Dorsolateral prefrontal cortex (tissue), 120 donors: ENCODE measurements at regions of chr18 and their contacts with region 1.

Region 1: DNA sequence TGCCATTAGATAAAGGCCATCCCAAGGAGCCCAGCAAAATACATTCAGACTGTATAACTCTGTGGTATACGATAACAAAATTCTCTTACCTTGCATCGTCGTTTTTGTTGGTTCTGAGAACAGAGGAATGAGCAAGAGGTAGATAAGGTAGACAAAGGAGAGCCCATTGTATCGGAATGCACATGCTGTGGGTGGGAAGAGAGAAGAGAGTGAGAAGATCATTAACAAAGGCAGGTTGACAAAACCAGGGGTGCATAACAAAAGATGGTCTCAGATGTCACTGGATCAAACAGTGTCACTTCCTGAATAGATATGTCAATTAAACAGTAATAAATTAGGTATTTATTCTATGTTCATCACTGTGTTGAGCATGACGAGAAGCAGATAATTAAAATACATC is 83.3 kb downstream of the PIEZO2 start:
- DNase-seq: no peak
- H3K4me3 ChIP-seq: no peak overlapping the region
- H3K27ac ChIP-seq: no peak overlapping the region
- H3K27me3 ChIP-seq: no peaks in the 10 kb centered on the region
- CTCF ChIP-seq: no peak

Region 2: DNA sequence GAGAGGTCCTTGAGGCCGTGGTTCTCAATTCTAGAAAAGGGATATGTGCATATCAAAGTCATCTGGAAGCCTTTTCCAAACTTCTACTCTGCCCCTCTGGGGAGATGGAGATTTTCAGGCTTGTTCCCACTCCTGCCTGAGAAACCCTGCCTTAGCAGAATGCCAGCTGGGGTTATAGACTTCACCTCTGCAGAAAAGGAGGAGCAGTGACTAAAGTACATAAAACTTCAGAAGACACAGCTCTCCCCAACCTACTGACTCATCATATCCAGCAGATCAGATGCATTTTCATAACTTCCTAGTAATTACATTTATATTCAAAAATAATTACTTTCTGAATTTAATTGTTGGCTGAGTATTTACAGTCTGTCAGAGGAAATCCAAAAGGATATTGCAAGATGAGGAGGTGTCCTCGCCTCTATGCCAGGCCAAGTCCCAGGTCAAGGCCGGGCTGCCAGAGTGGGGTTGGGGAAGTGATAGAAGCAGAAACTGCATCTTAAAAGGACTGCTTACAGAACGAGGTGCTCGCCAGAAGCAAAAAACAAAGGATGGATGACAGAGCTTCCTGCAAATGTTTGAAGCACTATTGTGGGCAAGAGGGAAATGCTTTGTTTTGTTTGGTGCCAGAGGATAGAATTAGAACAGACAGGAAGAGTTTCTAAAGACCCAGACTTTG is 687.2 kb before region 1 on chr18:
- intact Hi-C with region 1: no loop called
- DNase-seq: no peak
- H3K4me3 ChIP-seq: no peak overlapping the region
- H3K27ac ChIP-seq: no peak overlapping the region
- H3K27me3 ChIP-seq: no peaks in the 10 kb centered on the region
- CTCF ChIP-seq: no peak

Region 3: DNA sequence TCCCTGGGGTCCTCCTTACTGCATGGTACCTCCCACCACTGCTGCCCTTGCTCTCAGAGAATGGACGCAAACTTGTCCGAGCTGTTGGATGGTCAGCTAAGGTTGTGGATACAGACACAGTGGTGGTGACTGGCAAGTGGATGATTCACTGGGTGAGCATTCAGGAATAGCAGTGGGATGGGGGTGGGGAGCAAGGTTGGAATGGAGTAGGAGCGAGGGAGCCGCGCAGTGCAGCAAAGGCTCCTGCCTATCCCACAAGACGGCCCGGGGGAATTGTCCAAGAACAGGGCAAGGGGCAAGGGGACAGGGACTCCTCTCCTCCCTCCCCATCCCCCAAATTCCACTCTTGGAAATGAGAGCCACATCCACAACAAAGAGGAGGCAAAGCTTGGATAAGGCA is 18.9 kb before region 1 on chr18:
- intact Hi-C with region 1: loop called in 1 of 2 experiments (anchors 2 kb)
- DNase-seq: no peak
- H3K4me3 ChIP-seq: no peak overlapping the region
- H3K27ac ChIP-seq: peak overlapping the region in 1 of 59 donors; percentile 11
- H3K27me3 ChIP-seq: no peaks in the 10 kb centered on the region
- CTCF ChIP-seq: no peak

Region 4: GRCh38 chr18:11096411-11096810 is 30.4 kb after region 1 on chr18:
- intact Hi-C with region 1: no loop called
- DNase-seq: no peak
- H3K4me3 ChIP-seq: peak overlapping the region in 1 of 59 donors; percentile 25
- H3K27ac ChIP-seq: peak overlapping the region in 1 of 59 donors; percentile 39
- H3K27me3 ChIP-seq: no peaks in the 10 kb centered on the region
- CTCF ChIP-seq: no peak